ENCODE measurements at regions of chr1 and their contacts with region 1.

Region 1: GRCh38 chr1:54800899-54801759 is at the start of gene TTC22:
- DNase-seq: peak in 1 of 2 donors; percentile 63
- H3K4me3 ChIP-seq: peak within 1 kb of the TSS; percentile 25 to 37
- H3K27ac ChIP-seq: no peak within 1 kb of the TSS
- H3K4me1 ChIP-seq: peaks cover 0 to 44% (median 17%) of the 10 kb centered on the region in 4 donors
- H3K27me3 ChIP-seq: peaks cover 0 to 38% of the 10 kb centered on the region in 2 donors
- CTCF ChIP-seq: no peak

Region 2: GRCh38 chr1:54095546-54096226 is 705.4 kb before region 1 on chr1:
- intact Hi-C with region 1: loop called (anchors 10 kb)
- DNase-seq: no peak
- H3K4me3 ChIP-seq: no peak overlapping the region
- H3K27ac ChIP-seq: no peak overlapping the region
- H3K4me1 ChIP-seq: no peaks in the 10 kb centered on the region
- H3K27me3 ChIP-seq: no peaks in the 10 kb centered on the region
- CTCF ChIP-seq: no peak

Region 3: DNA sequence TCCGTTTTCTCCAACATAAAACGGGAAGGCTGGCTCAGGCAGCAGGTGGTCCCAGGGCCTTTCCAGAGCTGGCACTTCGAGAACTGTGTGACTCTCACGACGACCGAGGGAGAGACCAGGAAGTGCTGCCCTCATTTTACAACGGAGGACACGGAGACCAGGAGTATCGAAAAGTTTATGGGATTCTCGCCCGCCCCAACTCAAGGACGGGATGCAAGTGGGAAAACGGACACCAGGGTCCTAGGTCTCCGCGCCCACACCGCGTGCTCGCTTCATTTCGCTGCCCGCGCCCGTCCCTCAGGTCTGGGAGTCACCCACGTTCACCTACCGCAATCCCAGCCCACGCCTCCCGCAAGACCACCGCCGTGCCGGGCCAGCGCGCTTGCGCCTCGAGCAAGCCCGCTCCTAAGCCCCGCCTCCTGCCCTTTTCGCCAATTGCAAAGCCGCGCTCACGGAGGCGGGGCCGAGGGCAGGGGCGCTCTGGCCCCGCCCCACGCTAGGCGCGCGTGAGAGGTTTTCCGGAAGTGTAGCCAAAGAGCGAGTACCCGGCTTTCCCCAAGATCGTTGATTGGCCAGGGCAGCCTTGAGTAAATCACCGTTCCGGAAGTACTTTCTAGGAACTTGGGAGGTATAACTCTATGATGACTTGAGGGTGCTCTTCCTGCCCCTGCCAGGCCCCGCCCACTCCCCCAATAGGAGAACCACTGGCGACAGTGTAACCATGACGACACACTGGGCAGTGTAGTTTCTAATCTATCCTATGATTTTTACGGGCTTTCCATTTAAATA is 36.8 kb before region 1 on chr1 and contains the start of gene PARS2:
- intact Hi-C with region 1: no loop called
- DNase-seq: peak; percentile 98
- H3K4me3 ChIP-seq: peak within 1 kb of the TSS; percentile 71 to 94
- H3K27ac ChIP-seq: peak within 1 kb of the TSS; percentile 75 to 78
- H3K4me1 ChIP-seq: peaks cover 10 to 14% (median 10%) of the 10 kb centered on the region in 4 donors
- H3K27me3 ChIP-seq: peaks cover 0 to 2% of the 10 kb centered on the region in 2 donors
- CTCF ChIP-seq: no peak

Region 4: GRCh38 chr1:54818461-54819194 is 17.5 kb after region 1 on chr1:
- intact Hi-C with region 1: no loop called
- DNase-seq: no peak
- H3K4me3 ChIP-seq: no peak overlapping the region
- H3K27ac ChIP-seq: no peak overlapping the region
- H3K4me1 ChIP-seq: no peaks in the 10 kb centered on the region
- H3K27me3 ChIP-seq: peaks cover 0 to 12% of the 10 kb centered on the region in 2 donors
- CTCF ChIP-seq: no peak

Region 5: DNA sequence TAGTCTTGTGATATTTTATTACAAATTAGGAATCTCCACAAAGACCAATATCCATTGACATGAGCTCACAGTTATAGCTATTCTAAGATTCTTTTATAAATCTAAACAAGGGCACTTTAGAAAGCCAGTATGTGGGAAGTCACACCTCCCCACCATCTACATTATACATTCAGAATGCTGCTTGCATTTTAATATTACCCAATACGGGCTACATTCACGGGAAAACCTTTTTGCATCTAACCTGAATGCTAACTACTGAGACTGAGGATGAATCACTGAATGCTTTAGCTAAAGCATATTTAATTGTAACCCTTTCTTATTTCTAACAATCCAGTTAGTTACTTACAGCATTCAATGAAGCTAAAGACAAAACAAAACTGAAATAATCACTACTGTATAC is 291.3 kb after region 1 on chr1:
- intact Hi-C with region 1: no loop called
- DNase-seq: no peak
- H3K4me3 ChIP-seq: no peak overlapping the region
- H3K27ac ChIP-seq: no peak overlapping the region
- H3K4me1 ChIP-seq: no peaks in the 10 kb centered on the region
- H3K27me3 ChIP-seq: no peaks in the 10 kb centered on the region
- CTCF ChIP-seq: no peak

Measured in tibial artery (tissue), 4 donors.